OCI-LY7 (cell line): ENCODE measurements at regions of chr9 and their contacts with region 1.

Region 1: GRCh38 chr9:69672596-69673310 is 582 bp upstream of the APBA1 start:
- DNase-seq: peak; percentile 68
- H3K4me3 ChIP-seq: peak overlapping the region; percentile 49
- H3K27ac ChIP-seq: no peak overlapping the region
- H3K4me1 ChIP-seq: no peaks in the 10 kb centered on the region
- CTCF ChIP-seq: peak; percentile 80

Region 2: GRCh38 chr9:69877854-69878514 is 205.2 kb after region 1 on chr9:
- CTCF ChIA-PET with region 1: no interaction called
- POLR2A ChIA-PET with region 1: no interaction called
- intact Hi-C with region 1: loop called (anchors 5 kb)
- DNase-seq: peak; percentile 23
- H3K4me3 ChIP-seq: no peak overlapping the region
- H3K27ac ChIP-seq: no peak overlapping the region
- H3K4me1 ChIP-seq: no peaks in the 10 kb centered on the region
- CTCF ChIP-seq: peak; percentile 79

Region 3: GRCh38 chr9:70080481-70081119 is 407.8 kb after region 1 on chr9:
- CTCF ChIA-PET with region 1: no interaction called
- POLR2A ChIA-PET with region 1: no interaction called
- intact Hi-C with region 1: no loop called
- DNase-seq: no peak
- H3K4me3 ChIP-seq: no peak overlapping the region
- H3K27ac ChIP-seq: no peak overlapping the region
- H3K4me1 ChIP-seq: no peaks in the 10 kb centered on the region
- CTCF ChIP-seq: no peak